Activated naive CD4-positive, alpha-beta T cell treated with anti-CD3 and anti-CD28 coated beads, Interleukin-2, amount 10 ng/mL, durations not matched to agents 7 days and 5 days (primary cell): ENCODE measurements at regions of chr1 and their contacts with region 1.

Region 1: DNA sequence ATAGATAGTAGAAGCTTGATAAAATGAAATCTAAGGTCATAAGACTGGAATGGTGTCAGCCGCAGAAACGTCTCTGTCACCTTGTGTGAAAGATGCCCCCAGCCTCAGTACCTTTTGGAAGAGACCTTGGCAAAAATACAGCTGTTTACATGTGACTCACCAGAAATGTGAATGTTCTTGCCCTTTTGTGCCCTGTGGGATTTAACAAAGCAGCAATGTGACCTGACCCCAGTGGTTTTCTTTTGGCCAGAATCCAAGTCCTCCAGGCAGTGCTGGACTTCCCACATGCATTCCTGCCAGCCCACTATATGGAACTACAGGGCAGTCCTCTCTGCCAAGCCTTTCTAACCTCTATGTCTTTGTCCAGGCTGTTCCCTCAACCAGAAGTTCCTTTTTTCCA is 27.2 kb upstream of the LRRC8C start:
- DNase-seq: no peak
- H3K4me3 Mint-ChIP-seq: no peak overlapping the region
- H3K27ac Mint-ChIP-seq: peak overlapping the region; percentile 100
- H3K4me1 Mint-ChIP-seq: peaks cover 95% of the 10 kb centered on the region
- H3K27me3 Mint-ChIP-seq: peaks cover 9% of the 10 kb centered on the region

Region 2: DNA sequence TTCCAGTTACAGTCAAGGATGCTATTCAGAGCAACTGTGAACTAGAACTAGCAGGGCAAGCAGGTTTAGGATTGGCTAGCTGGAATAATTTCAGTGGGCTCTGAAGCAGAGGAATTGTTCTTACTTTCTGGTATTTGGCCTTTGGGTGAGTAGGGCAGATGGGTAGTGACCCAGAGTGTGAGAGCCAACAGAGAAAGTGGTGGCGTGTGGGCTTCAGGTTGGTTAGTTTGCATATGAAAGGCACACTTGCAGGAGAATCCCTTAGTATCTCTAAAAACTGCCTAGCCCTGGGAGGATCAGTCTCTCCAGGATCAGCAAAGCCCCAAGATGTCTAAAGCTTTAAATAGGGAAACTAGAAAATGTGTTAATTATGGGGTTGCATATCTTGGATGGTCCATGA is 148.6 kb before region 1 on chr1:
- CTCF ChIA-PET with region 1: no interaction called
- DNase-seq: no peak
- H3K4me3 Mint-ChIP-seq: no peak overlapping the region
- H3K27ac Mint-ChIP-seq: no peak overlapping the region
- H3K4me1 Mint-ChIP-seq: peaks cover 6% of the 10 kb centered on the region
- H3K27me3 Mint-ChIP-seq: peaks cover 46% of the 10 kb centered on the region

Region 3: GRCh38 chr1:89483010-89483756 is 122.5 kb before region 1 on chr1:
- CTCF ChIA-PET with region 1: interaction called, 21 read pairs
- DNase-seq: peak; percentile 90
- H3K4me3 Mint-ChIP-seq: no peak overlapping the region
- H3K27ac Mint-ChIP-seq: no peak overlapping the region
- H3K4me1 Mint-ChIP-seq: peaks cover 13% of the 10 kb centered on the region
- H3K27me3 Mint-ChIP-seq: peaks cover 20% of the 10 kb centered on the region

Region 4: GRCh38 chr1:89622895-89623294 is 17.2 kb after region 1 on chr1:
- CTCF ChIA-PET with region 1: interaction called, 25 read pairs
- DNase-seq: no peak
- H3K4me3 Mint-ChIP-seq: no peak overlapping the region
- H3K27ac Mint-ChIP-seq: no peak overlapping the region
- H3K4me1 Mint-ChIP-seq: peaks cover 54% of the 10 kb centered on the region
- H3K27me3 Mint-ChIP-seq: no peaks in the 10 kb centered on the region

Region 5: DNA sequence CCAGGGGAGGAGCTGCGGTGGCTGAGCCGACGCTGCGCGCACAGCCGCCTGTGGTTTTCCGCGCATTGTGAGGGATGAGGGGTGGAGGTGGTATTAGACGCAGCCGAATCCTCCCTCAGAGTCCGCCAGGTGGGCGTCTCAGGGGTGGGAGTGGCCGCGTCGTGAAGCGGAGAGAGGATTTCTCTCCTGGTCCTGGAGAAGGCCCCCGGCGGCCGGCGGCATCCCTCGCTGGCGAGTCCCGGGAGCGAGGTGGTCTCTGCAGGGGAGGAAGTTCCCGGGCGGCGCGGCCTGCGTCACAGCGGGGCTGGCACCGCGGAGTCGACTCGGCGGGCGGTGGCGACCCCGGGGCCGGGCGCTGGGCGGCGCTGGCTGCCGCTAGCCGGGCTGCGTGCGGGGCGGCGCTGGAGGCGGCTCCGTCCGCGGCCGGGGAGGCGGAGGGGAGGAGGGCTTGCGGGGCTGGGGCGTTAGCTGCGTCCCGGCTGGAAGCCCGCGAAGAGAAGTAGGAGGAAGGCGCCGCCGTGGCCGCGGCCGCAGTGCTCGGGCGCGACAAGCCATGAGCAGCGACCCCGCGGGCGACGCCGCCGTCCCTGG is 27.1 kb after region 1 on chr1 and contains the start of gene LRRC8C:
- CTCF ChIA-PET with region 1: interaction called, 53 read pairs
- DNase-seq: peak; percentile 89
- H3K4me3 Mint-ChIP-seq: peak within 1 kb of the TSS; percentile 91
- H3K27ac Mint-ChIP-seq: peak within 1 kb of the TSS; percentile 96
- H3K4me1 Mint-ChIP-seq: peaks cover 78% of the 10 kb centered on the region
- H3K27me3 Mint-ChIP-seq: peaks cover 4% of the 10 kb centered on the region